ENCODE measurements at regions of chr21 and their contacts with region 1.

Region 1: GRCh38 chr21:32826329-32827167 is 55.0 kb upstream of the PAXBP1 start:
- DNase-seq: peak; percentile 72
- ATAC-seq: peak; percentile 100
- H3K4me3 ChIP-seq: no peak overlapping the region
- H3K27ac ChIP-seq: no peak overlapping the region
- H3K4me1 ChIP-seq: no peaks in the 10 kb centered on the region
- H3K27me3 ChIP-seq: no peaks in the 10 kb centered on the region
- CTCF ChIP-seq: peak; percentile 79

Region 2: GRCh38 chr21:32653311-32653901 is 173.1 kb before region 1 on chr21:
- CTCF ChIA-PET with region 1: no interaction called
- POLR2A ChIA-PET with region 1: no interaction called
- intact Hi-C with region 1: loop called (anchors 1 kb)
- DNase-seq: peak; percentile 51
- ATAC-seq: peak; percentile 90
- H3K4me3 ChIP-seq: no peak overlapping the region
- H3K27ac ChIP-seq: no peak overlapping the region
- H3K4me1 ChIP-seq: no peaks in the 10 kb centered on the region
- H3K27me3 ChIP-seq: no peaks in the 10 kb centered on the region
- CTCF ChIP-seq: peak; percentile 92

Region 3: DNA sequence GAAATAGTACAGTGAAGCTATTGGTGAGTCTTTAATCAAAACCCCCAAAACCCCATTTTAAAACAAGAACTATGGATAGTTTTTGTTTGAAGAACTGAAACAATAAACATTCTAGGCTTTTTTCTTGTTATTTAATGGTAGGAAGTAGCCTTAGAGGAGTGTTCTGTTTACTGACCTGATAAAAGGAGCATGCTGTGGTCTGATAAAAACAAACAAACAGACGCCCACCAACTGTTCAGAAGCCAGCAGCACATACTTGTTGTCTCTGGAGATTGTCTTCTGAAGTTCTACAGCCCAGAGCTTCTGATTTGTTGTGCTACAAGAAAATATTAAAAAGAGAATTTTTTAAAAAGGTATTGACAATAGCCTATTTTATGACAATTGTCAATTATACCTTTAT is 160.3 kb before region 1 on chr21:
- CTCF ChIA-PET with region 1: no interaction called
- POLR2A ChIA-PET with region 1: interaction called, 19 read pairs
- intact Hi-C with region 1: no loop called
- DNase-seq: no peak
- ATAC-seq: no peak
- H3K4me3 ChIP-seq: no peak overlapping the region
- H3K27ac ChIP-seq: no peak overlapping the region
- H3K4me1 ChIP-seq: peaks cover 5% of the 10 kb centered on the region
- H3K27me3 ChIP-seq: no peaks in the 10 kb centered on the region
- CTCF ChIP-seq: no peak

Region 4: GRCh38 chr21:32782698-32783097 is 43.9 kb before region 1 on chr21:
- CTCF ChIA-PET with region 1: interaction called, 11 read pairs
- POLR2A ChIA-PET with region 1: no interaction called
- intact Hi-C with region 1: loop called (anchors 1 kb)
- DNase-seq: no peak
- ATAC-seq: peak; percentile 74
- H3K4me3 ChIP-seq: no peak overlapping the region
- H3K27ac ChIP-seq: no peak overlapping the region
- H3K4me1 ChIP-seq: no peaks in the 10 kb centered on the region
- H3K27me3 ChIP-seq: no peaks in the 10 kb centered on the region
- CTCF ChIP-seq: peak; percentile 47; the same call in 1 of the 2 replicates